Activated CD8-positive, alpha-beta T cell treated with anti-CD3 and anti-CD28 coated beads, Interleukin-2, amount 10 ng/mL, durations not matched to agents 7 days and 5 days (primary cell): ENCODE measurements at regions of chr3 and their contacts with region 1.

Region 1: GRCh38 chr3:14203521-14204079 is 25.0 kb downstream of the LSM3 start:
- DNase-seq: peak; percentile 60
- ATAC-seq: peak; percentile 73
- H3K4me3 Mint-ChIP-seq: no peak overlapping the region
- H3K27ac Mint-ChIP-seq: no peak overlapping the region
- H3K4me1 Mint-ChIP-seq: no peaks in the 10 kb centered on the region
- H3K27me3 Mint-ChIP-seq: no peaks in the 10 kb centered on the region

Region 2: DNA sequence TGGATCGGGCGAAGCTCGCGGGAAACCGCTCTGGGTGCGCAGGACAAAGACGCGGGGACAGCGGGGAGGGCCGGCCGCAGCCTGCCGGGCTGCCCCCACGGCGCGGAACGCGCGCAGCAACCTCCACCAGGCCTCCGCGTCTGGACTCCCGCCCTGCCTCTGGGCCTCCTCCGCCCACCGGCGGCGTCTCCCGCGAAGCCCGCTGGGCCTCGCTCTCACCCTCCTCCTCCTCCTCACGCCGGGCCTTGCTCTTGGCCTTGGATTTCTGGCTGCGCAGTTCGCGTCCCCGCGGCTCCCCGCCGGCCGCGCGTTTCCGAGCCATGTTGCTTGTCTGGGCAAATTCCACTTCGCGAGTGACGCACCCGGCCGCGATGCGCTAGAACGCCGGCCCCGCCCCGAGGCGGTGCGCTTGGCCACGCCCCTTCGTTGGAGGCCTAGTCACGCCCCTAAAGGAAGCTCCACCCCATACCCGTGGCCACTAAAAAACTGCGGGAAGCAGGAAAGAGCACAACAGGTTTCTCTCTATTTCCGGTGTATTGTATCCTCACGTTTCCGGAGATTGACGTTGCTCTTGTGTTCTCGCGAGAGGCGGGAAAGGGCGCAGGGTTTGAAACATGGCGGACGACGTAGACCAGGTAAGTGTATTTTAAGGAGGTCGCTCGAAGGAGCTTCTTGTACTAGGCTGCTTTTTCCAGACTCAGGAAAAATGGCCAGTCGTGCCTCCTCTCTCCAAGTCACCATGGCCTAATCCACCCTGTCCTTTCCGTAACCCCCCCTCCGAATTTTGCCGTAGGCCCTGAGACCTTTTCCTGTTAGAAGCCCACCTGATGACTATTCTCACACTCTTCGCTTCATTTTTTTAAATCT is 25.1 kb before region 1 on chr3 and contains the starts of genes LSM3 and XPC:
- CTCF ChIA-PET with region 1: interaction called, 22 read pairs
- POLR2A ChIA-PET with region 1: interaction called, 10 read pairs
- DNase-seq: peak; percentile 97
- ATAC-seq: peak; percentile 91
- H3K4me3 Mint-ChIP-seq: peak within 1 kb of the TSS; percentile 98
- H3K27ac Mint-ChIP-seq: peak within 1 kb of the TSS; percentile 99
- H3K4me1 Mint-ChIP-seq: peaks cover 62% of the 10 kb centered on the region
- H3K27me3 Mint-ChIP-seq: no peaks in the 10 kb centered on the region
- total RNA-seq, gene LSM3: 19.2 to 20.2 TPM
- total RNA-seq, gene XPC: 29.4 to 31.6 TPM

Region 3: DNA sequence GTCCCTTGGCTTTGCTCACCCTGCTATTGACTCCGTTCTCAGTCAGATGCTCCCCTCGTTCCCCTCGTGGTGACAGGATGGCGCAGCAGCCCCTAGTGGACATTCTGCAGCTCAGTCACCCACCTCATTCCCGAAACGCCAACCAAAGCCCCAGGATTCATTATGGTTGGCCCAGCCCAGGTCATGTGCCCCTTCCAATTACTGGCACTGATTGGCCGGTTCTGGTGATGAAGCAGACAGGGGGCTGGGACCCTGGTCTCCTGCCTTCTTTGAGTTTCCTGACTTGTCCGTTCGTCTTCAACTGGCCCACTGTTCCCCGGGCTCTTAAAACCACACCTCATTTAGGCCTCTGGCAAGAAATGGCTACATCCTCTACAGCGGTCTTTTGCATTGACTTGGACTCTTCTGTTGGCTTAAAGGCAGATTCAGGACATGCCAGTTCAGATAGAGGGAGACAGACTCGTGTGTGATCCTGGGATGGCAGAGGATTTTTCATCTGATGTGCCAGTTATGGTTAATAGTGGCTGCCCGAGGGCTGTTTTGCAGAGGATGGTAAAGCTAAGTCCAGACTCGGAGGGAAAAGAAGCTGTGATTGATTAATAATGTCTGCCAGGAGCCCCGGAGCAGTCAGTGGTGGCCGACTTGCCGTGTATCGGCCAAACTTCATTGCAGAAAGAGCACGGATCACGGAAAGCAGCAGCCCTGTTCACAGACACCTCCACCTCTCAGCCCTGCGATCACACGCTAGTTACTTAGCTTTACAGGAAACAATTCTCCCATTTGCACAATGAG is 12.9 kb after region 1 on chr3:
- CTCF ChIA-PET with region 1: interaction called, 24 read pairs
- POLR2A ChIA-PET with region 1: no interaction called
- DNase-seq: peak; percentile 2
- ATAC-seq: no peak
- H3K4me3 Mint-ChIP-seq: no peak overlapping the region
- H3K27ac Mint-ChIP-seq: no peak overlapping the region
- H3K4me1 Mint-ChIP-seq: no peaks in the 10 kb centered on the region
- H3K27me3 Mint-ChIP-seq: peaks cover 2% of the 10 kb centered on the region

Region 4: GRCh38 chr3:14231998-14232501 is 28.4 kb after region 1 on chr3:
- CTCF ChIA-PET with region 1: interaction called, 11 read pairs
- POLR2A ChIA-PET with region 1: no interaction called
- DNase-seq: no peak
- ATAC-seq: no peak
- H3K4me3 Mint-ChIP-seq: no peak overlapping the region
- H3K27ac Mint-ChIP-seq: no peak overlapping the region
- H3K4me1 Mint-ChIP-seq: peaks cover 11% of the 10 kb centered on the region
- H3K27me3 Mint-ChIP-seq: peaks cover 23% of the 10 kb centered on the region

Region 5: DNA sequence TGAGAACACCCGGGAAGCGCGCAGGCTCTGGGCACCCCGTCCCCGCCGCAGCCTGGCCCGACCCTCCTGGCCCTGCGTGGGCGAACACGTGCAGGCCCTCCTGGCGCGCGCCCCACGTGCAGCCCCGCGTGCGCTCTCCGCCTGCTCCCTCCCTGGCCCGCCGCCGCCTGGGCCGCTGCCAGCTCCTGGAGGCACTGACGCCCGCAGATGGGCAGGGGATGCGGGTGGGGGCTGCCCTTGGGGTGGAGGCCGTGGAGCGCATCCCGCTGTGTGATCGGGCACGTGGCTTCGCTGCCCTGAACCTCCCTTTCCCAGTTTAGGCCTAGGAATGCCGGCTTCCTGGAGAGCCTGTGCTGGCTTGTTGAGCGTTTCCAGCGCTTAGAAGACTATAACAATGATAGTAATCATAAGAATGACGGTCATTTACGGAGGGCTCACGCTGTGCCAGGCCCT is 94.2 kb after region 1 on chr3:
- CTCF ChIA-PET with region 1: no interaction called
- POLR2A ChIA-PET with region 1: no interaction called
- DNase-seq: no peak
- ATAC-seq: no peak
- H3K4me3 Mint-ChIP-seq: no peak overlapping the region
- H3K27ac Mint-ChIP-seq: no peak overlapping the region
- H3K4me1 Mint-ChIP-seq: peaks cover 11% of the 10 kb centered on the region
- H3K27me3 Mint-ChIP-seq: peaks cover 32% of the 10 kb centered on the region

Region 6: GRCh38 chr3:14461748-14462324 is 258.2 kb after region 1 on chr3:
- CTCF ChIA-PET with region 1: interaction called, 27 read pairs
- POLR2A ChIA-PET with region 1: no interaction called
- DNase-seq: peak; percentile 59
- ATAC-seq: peak; percentile 77
- H3K4me3 Mint-ChIP-seq: no peak overlapping the region
- H3K27ac Mint-ChIP-seq: peak overlapping the region; percentile 65
- H3K4me1 Mint-ChIP-seq: peaks cover 12% of the 10 kb centered on the region
- H3K27me3 Mint-ChIP-seq: no peaks in the 10 kb centered on the region